ENCODE measurements at regions of chr5 and their contacts with region 1.

Region 1: GRCh38 chr5:138352071-138352721 is at the start of gene KDM3B:
- DNase-seq: peak; percentile 94
- ATAC-seq: peak; percentile 76
- H3K4me3 Mint-ChIP-seq: peak within 1 kb of the TSS; percentile 92
- H3K27ac Mint-ChIP-seq: peak within 1 kb of the TSS; percentile 94
- H3K4me1 Mint-ChIP-seq: peaks cover 23% of the 10 kb centered on the region
- H3K27me3 Mint-ChIP-seq: no peaks in the 10 kb centered on the region
- CTCF ChIP-seq: peak; percentile 100
- total RNA-seq, gene KDM3B: 86.2 to 89.0 TPM (median 87.9 TPM) in 3 replicates

Region 2: GRCh38 chr5:138213161-138214029 is 138.8 kb before region 1 on chr5 and contains the start of gene CDC23:
- CTCF ChIA-PET with region 1: interaction called, 63 read pairs
- POLR2A ChIA-PET with region 1: interaction called, 6 read pairs
- DNase-seq: peak; percentile 95
- ATAC-seq: peak; percentile 98
- H3K4me3 Mint-ChIP-seq: peak within 1 kb of the TSS; percentile 99
- H3K27ac Mint-ChIP-seq: peak within 1 kb of the TSS; percentile 99
- H3K4me1 Mint-ChIP-seq: peaks cover 5% of the 10 kb centered on the region; the same call in 1 of the 2 replicates
- H3K27me3 Mint-ChIP-seq: no peaks in the 10 kb centered on the region; the same call in none of the 2 replicates
- CTCF ChIP-seq: no peak
- total RNA-seq, gene CDC23: 43.8 to 45.3 TPM (median 44.5 TPM) in 3 replicates

Region 3: GRCh38 chr5:138331449-138332368 is 20.5 kb before region 1 on chr5 and contains the start of gene CDC25C:
- CTCF ChIA-PET with region 1: interaction called, 187 read pairs
- POLR2A ChIA-PET with region 1: interaction called, 61 read pairs
- DNase-seq: peak; percentile 98
- ATAC-seq: peak; percentile 99
- H3K4me3 Mint-ChIP-seq: peak within 1 kb of the TSS; percentile 91
- H3K27ac Mint-ChIP-seq: peak within 1 kb of the TSS; percentile 97
- H3K4me1 Mint-ChIP-seq: peaks cover 18% of the 10 kb centered on the region
- H3K27me3 Mint-ChIP-seq: no peaks in the 10 kb centered on the region
- CTCF ChIP-seq: no peak
- total RNA-seq, gene CDC25C: 15.0 to 18.8 TPM (median 16.1 TPM) in 3 replicates

Region 4: DNA sequence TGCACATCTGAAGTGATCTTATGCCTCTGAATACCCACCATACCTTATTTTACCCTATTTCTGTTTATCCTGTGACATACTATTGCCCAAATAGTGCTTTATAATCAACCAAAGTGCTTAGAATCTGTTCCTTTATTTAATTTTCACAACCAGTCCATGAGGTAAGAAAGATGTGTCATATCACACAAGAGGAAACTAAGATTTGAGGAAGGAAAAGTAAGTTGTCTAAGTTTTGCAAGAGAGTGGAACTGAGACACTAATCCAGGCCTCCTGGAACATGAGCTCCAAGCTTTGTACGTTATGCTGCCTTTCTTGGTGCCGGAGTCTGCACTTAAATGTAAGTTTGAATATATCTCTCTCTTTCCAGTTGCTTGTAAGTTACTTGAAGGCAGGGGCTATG is 17.5 kb after region 1 on chr5:
- CTCF ChIA-PET with region 1: interaction called, 69 read pairs
- POLR2A ChIA-PET with region 1: interaction called, 6 read pairs
- DNase-seq: no peak
- ATAC-seq: no peak
- H3K4me3 Mint-ChIP-seq: no peak overlapping the region
- H3K27ac Mint-ChIP-seq: no peak overlapping the region; the same call in 1 of the 2 replicates
- H3K4me1 Mint-ChIP-seq: no peaks in the 10 kb centered on the region
- H3K27me3 Mint-ChIP-seq: no peaks in the 10 kb centered on the region
- CTCF ChIP-seq: no peak

Region 5: GRCh38 chr5:138438724-138439476 is 86.7 kb after region 1 on chr5 and contains the start of gene REEP2:
- CTCF ChIA-PET with region 1: interaction called, 27 read pairs
- POLR2A ChIA-PET with region 1: no interaction called
- DNase-seq: peak; percentile 74
- ATAC-seq: peak; percentile 72
- H3K4me3 Mint-ChIP-seq: peak within 1 kb of the TSS; percentile 85
- H3K27ac Mint-ChIP-seq: peak within 1 kb of the TSS; percentile 8
- H3K4me1 Mint-ChIP-seq: peaks cover 19% of the 10 kb centered on the region
- H3K27me3 Mint-ChIP-seq: no peaks in the 10 kb centered on the region
- CTCF ChIP-seq: no peak
- total RNA-seq, gene REEP2: 47.7 to 51.1 TPM (median 50.9 TPM) in 3 replicates

Region 6: GRCh38 chr5:138724519-138725085 is 372.4 kb after region 1 on chr5:
- CTCF ChIA-PET with region 1: no interaction called
- POLR2A ChIA-PET with region 1: no interaction called
- DNase-seq: peak; percentile 24
- ATAC-seq: peak; percentile 11
- H3K4me3 Mint-ChIP-seq: no peak overlapping the region
- H3K27ac Mint-ChIP-seq: peak overlapping the region; percentile 96
- H3K4me1 Mint-ChIP-seq: peaks cover 49% of the 10 kb centered on the region
- H3K27me3 Mint-ChIP-seq: no peaks in the 10 kb centered on the region; the same call in 1 of the 2 replicates
- CTCF ChIP-seq: no peak

Measured in WTC11 (cell line).